ENCODE measurements at regions of chr11 and their contacts with region 1.

Region 1: DNA sequence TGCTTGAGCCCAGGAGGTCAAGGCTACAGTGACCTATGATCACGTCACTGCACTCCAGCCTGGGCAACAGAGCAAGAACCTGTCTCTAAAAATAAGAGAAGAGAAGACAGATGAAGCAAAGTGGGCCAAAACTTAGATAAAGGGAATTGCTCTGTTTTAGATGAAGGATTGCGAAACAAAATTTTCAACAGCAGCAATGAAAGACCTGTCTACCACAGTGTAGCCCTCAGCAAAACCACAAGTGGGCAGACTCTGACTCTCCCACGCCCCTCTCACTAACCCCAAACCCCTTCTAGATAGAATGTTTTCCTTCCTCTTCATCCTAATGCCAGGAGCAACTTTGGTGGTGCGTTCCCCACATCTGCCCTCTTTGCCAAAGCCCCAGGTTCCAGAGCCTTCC is 105.6 kb upstream of the ALDH3B2 start:
- ATAC-seq: no peak
- H3K4me3 ChIP-seq: no peak overlapping the region
- H3K27ac ChIP-seq: no peak overlapping the region
- H3K4me1 ChIP-seq: no peaks in the 10 kb centered on the region

Region 2: DNA sequence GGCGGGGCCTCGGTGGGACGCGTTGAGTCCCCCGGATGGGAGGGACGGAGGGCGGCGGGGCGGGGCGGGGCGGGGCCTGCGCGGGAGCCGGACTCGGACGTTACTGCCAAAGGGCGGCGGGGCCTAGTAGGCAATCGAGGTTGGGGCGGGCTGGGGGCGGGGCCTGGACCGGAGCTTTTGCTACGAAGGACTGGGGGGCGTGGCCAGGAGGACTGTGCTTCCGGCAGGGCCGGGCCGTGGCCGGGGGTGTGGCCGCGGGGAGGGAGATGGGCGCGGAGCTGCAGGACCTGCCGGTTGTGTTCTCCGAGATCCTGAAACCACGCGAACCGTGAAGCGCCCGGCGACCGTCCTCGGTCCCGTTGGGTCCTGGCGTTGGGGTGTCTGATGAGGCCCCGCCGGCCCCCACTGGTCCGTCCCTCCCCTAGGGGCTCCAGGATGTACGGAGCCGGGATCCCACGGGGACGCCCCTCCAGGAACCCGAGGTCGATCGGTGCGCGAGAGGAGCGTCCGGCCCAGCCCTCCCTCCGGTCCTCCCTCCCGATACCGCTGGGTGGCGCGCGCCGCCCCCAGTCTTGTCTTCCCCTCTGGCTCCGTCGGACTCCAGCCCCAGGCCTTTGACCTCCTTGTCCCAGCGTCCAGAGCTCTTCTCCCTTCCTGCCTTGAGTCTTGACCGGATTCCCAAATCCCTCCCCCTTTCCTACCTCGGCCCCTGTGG is 149.7 kb before region 1 on chr11:
- in situ Hi-C with region 1: loop called in 1 of 9 experiments (anchors 25 kb)
- ATAC-seq: peak; percentile 73 to 81 (median 78)
- H3K4me3 ChIP-seq: peak overlapping the region; percentile 51 to 80 (median 59)
- H3K27ac ChIP-seq: peak overlapping the region; percentile 81 to 87
- H3K4me1 ChIP-seq: peaks cover 14 to 22% of the 10 kb centered on the region in 2 donors

Region 3: DNA sequence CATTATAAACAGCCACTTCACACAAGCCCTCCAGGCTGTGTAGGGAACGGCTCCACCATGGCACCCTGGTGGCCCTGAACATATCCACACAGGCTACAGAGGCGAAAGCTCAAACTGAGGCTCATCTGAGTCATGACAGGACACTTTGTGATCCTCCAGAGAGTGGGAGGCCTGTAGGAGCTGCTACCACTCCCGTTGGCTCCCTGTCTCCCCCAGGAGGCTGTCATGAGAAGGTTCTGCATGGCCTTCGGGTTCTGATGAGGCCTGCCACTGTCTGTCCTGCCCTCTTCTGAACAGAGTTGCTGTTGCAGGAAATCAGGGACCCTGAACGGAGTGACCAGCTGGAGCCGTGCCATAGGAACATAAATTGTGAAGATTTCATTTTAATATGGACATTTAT is 81.8 kb before region 1 on chr11:
- in situ Hi-C with region 1: loop called in 1 of 9 experiments (anchors 25 kb)
- ATAC-seq: peak in 3 of 8 experiments; percentile 70 to 93 (median 81)
- H3K4me3 ChIP-seq: no peak overlapping the region
- H3K27ac ChIP-seq: no peak overlapping the region
- H3K4me1 ChIP-seq: no peaks in the 10 kb centered on the region

Region 4: DNA sequence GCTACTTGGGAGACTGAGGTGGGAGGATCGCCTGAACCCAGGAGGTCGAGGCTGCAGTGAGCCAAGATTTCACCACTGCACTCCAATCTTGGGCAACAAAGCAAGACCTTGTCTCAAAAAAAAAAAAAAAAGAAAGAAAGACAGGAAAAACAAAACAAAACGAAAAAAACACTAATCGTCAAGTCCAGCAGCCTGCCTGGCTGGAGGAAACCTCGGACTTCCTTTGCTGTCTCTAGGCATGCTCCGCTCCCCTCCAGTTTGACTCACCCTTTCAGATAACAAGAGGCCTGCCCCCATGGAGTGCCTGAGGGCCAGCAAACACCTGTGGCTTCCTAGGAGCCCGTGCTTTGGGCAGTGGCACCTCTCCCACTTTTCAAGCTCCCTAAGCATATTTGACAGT is 370.0 kb after region 1 on chr11:
- in situ Hi-C with region 1: no loop called
- ATAC-seq: no peak
- H3K4me3 ChIP-seq: no peak overlapping the region
- H3K27ac ChIP-seq: no peak overlapping the region
- H3K4me1 ChIP-seq: peaks cover 4 to 10% of the 10 kb centered on the region in 2 donors

Measured in motor neuron (in vitro differentiated cells).